Activated CD4-positive, alpha-beta T cell treated with anti-CD3 and anti-CD28 coated beads, Interleukin-2, amount 10 ng/mL, durations not matched to agents 24 days and 14 days (primary cell): ENCODE measurements at regions of chr19 and their contacts with region 1.

Region 1: GRCh38 chr19:49506575-49507105 is 5.8 kb upstream of the FCGRT start:
- DNase-seq: peak; percentile 94
- H3K4me3 Mint-ChIP-seq: no peak overlapping the region
- H3K27ac Mint-ChIP-seq: no peak overlapping the region
- H3K4me1 Mint-ChIP-seq: peaks cover 25% of the 10 kb centered on the region
- H3K27me3 Mint-ChIP-seq: no peaks in the 10 kb centered on the region

Region 2: DNA sequence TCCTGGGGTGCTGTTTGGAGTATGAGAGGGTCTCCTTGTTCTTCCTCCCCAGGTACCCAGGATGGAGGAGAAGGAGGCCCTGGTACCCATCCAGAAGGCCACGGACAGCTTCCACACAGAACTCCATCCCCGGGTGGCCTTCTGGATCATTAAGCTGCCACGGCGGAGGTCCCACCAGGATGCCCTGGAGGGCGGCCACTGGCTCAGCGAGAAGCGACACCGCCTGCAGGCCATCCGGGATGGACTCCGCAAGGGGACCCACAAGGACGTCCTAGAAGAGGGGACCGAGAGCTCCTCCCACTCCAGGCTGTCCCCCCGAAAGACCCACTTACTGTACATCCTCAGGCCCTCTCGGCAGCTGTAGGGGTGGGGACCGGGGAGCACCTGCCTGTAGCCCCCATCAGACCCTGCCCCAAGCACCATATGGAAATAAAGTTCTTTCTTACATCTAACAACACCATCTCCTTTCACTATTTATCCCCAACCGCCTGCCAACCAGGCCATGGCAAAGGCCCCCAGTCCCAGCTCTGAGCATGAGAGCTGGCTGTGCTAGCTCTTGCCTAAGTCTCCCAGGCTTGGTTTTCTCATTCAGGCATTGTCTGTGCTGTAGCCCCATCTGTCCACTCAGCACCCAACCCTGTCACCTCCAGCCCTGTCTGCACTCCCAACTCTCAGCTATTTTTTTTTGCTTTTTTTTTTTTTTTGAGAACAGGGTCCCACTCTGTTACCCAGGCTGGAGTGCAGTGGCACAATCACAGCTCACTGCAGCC is 131.8 kb before region 1 on chr19:
- intact Hi-C with region 1: no loop called
- DNase-seq: no peak
- H3K4me3 Mint-ChIP-seq: no peak overlapping the region
- H3K27ac Mint-ChIP-seq: no peak overlapping the region
- H3K4me1 Mint-ChIP-seq: no peaks in the 10 kb centered on the region
- H3K27me3 Mint-ChIP-seq: peaks cover 4% of the 10 kb centered on the region

Region 3: GRCh38 chr19:49481020-49481683 is 25.5 kb before region 1 on chr19:
- intact Hi-C with region 1: no loop called
- DNase-seq: no peak
- H3K4me3 Mint-ChIP-seq: no peak overlapping the region
- H3K27ac Mint-ChIP-seq: peak overlapping the region; percentile 41
- H3K4me1 Mint-ChIP-seq: peaks cover 15% of the 10 kb centered on the region
- H3K27me3 Mint-ChIP-seq: no peaks in the 10 kb centered on the region

Region 4: GRCh38 chr19:49528211-49528771 is 21.7 kb after region 1 on chr19:
- intact Hi-C with region 1: loop called (anchors 2 kb)
- DNase-seq: no peak
- H3K4me3 Mint-ChIP-seq: peak overlapping the region; percentile 81
- H3K27ac Mint-ChIP-seq: peak overlapping the region; percentile 29
- H3K4me1 Mint-ChIP-seq: peaks cover 20% of the 10 kb centered on the region
- H3K27me3 Mint-ChIP-seq: peaks cover 4% of the 10 kb centered on the region

Region 5: DNA sequence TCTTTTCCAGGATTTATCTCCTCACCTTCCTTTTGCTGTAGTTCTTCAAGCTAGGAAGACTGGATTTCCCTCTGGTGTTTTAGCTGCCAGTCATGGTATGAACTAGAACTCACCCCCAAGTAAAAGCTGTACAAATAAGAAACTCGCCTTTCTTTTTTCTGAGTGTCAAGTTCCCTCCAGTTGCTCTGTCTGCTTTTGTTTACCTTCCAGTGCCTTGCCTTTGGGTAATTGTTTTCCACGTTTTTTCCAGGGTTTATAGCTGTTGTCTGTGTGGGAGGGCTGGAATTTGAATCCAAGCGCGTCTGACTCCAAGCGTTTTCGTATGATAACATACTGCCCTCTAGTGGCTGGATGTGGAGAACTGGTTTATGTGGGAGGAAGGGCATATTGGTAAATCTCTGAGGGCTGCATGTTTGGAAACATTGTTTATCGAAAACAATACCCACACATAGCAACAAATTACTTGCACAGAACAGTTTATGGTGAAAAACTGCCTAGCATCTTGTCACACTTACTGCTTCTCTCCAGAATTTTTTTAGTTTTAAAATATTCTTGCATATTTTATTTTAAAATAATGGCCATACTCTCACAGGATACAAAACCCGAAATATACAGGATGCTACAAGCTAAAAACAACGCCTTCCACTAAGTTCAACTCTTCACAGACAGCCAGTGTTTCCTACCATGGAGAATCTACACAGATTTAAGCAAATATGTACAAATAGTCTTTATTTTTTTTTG is 40.4 kb after region 1 on chr19:
- intact Hi-C with region 1: loop called (anchors 1 kb)
- DNase-seq: peak; percentile 93
- H3K4me3 Mint-ChIP-seq: peak overlapping the region; percentile 78
- H3K27ac Mint-ChIP-seq: peak overlapping the region; percentile 71
- H3K4me1 Mint-ChIP-seq: peaks cover 29% of the 10 kb centered on the region
- H3K27me3 Mint-ChIP-seq: no peaks in the 10 kb centered on the region

Region 6: GRCh38 chr19:50290011-50290410 is 783.4 kb after region 1 on chr19:
- intact Hi-C with region 1: no loop called
- DNase-seq: no peak
- H3K4me3 Mint-ChIP-seq: no peak overlapping the region
- H3K27ac Mint-ChIP-seq: no peak overlapping the region
- H3K4me1 Mint-ChIP-seq: no peaks in the 10 kb centered on the region
- H3K27me3 Mint-ChIP-seq: peaks cover 10% of the 10 kb centered on the region